PC-3 (cell line): ENCODE measurements at regions of chr5 and their contacts with region 1.

Region 1: DNA sequence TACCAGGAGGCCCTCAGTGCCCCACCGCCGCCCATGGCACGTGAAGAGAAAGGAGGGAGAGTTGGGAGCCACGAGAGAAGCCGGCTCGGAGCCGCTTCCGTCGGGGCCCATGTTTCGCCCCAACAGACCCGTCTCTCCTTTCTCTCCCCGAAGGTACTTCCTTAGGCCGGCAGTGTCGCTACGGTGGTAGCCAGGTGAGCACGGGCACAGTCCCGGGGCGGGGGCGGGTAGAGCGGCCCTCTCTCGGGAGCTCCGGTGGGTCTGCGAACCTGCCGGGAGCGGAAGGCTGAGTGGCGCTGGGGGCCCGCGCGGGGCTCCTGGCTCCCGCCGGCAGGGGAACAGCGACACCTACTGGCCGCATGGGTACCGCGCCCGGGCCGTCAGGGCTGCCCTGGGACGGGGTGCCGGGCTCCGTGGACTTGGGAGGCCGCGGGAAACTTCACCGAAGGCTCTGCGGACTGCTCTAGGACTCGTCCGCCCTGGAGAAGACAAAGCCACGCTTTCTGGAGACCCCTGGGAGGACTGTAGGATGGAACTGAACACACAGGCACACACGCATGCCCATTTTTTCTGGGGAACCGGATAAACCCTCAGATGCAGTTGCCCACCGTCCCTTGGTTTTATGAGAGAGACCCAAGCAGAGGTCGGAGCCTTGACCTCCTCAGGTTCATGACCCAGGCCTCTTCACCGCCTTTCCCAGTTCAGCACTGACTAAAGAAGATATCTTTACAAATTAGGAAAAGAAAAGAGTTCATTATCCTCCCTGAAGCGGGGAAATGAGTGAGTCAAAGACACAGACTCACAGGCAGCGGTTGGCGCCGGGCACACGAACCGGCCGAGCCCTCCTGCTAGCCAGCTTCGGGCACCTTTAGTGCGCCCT is 202.5 kb downstream of the MEF2C start:
- DNase-seq: peak; percentile 80
- ATAC-seq: peak; percentile 96
- H3K4me3 ChIP-seq: peak overlapping the region; percentile 85
- H3K27ac ChIP-seq: no peak overlapping the region
- H3K4me1 ChIP-seq: peaks cover 6% of the 10 kb centered on the region; the same call in 1 of the 2 replicates
- H3K27me3 ChIP-seq: no peaks in the 10 kb centered on the region
- CTCF ChIP-seq: peak; percentile 89

Region 2: GRCh38 chr5:88268385-88269184 is 411.9 kb before region 1 on chr5 and contains the start of gene TMEM161B:
- CTCF ChIA-PET with region 1: no interaction called
- POLR2A ChIA-PET with region 1: interaction called, 4 read pairs
- intact Hi-C with region 1: loop called (anchors 2 kb)
- DNase-seq: peak; percentile 93
- ATAC-seq: peak; percentile 98
- H3K4me3 ChIP-seq: peak within 1 kb of the TSS; percentile 96
- H3K27ac ChIP-seq: peak within 1 kb of the TSS; percentile 28; the same call in 1 of the 2 replicates
- H3K4me1 ChIP-seq: peaks cover 33% of the 10 kb centered on the region
- H3K27me3 ChIP-seq: no peaks in the 10 kb centered on the region
- CTCF ChIP-seq: no peak
- total RNA-seq, gene TMEM161B: 11.5 and 12.2 TPM in 2 replicates

Region 3: DNA sequence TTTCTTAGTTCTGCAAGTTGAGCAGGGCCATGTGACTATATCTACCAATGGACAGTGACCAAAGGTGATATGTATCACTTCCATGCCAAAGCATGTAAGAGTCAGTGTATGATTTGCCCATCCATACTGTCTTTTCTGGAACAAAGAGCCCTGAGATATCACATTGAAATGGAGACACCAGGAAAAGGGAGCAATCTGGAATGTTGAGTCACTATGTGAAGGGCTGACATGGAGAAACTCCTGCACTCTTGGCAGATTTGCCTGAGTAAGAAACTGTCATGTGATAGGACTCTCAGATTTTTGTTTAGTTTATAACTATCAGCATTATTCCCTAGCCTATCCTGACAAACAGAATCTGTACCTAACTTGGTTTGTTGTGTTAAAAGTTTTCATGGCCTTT is 382.1 kb before region 1 on chr5:
- CTCF ChIA-PET with region 1: interaction called, 13 read pairs
- POLR2A ChIA-PET with region 1: no interaction called
- intact Hi-C with region 1: no loop called
- DNase-seq: peak; percentile 12
- ATAC-seq: no peak
- H3K4me3 ChIP-seq: no peak overlapping the region
- H3K27ac ChIP-seq: no peak overlapping the region
- H3K4me1 ChIP-seq: no peaks in the 10 kb centered on the region
- H3K27me3 ChIP-seq: no peaks in the 10 kb centered on the region
- CTCF ChIP-seq: no peak

Region 4: DNA sequence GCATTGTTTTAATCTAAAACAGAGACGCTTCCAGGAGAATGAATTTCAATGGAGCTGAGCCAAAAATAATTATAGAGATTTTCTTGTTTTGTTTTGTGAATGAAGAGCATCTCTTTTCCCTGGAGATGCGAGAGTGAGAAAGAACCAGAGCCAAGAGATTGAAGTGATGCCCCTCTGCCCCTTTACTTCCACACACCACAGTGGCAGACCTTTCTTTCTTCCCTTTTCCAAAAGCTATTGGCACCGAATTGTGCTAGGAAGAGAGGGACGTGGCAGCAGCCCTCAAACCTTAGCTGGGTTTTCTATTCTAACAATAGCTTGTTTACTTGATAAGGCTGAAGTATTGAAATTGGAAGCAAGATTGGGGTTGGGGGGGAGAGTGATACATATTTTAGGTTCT is 278.8 kb before region 1 on chr5:
- CTCF ChIA-PET with region 1: no interaction called
- POLR2A ChIA-PET with region 1: no interaction called
- intact Hi-C with region 1: no loop called
- DNase-seq: no peak
- ATAC-seq: no peak
- H3K4me3 ChIP-seq: no peak overlapping the region
- H3K27ac ChIP-seq: no peak overlapping the region
- H3K4me1 ChIP-seq: peaks cover 15% of the 10 kb centered on the region
- H3K27me3 ChIP-seq: no peaks in the 10 kb centered on the region
- CTCF ChIP-seq: no peak

Region 5: GRCh38 chr5:88732181-88732633 is 51.7 kb after region 1 on chr5:
- CTCF ChIA-PET with region 1: no interaction called
- POLR2A ChIA-PET with region 1: no interaction called
- intact Hi-C with region 1: no loop called
- DNase-seq: no peak
- ATAC-seq: no peak
- H3K4me3 ChIP-seq: no peak overlapping the region
- H3K27ac ChIP-seq: no peak overlapping the region
- H3K4me1 ChIP-seq: 0 out of 2 replicates have a peak, but pooled peaks cover 9% of the 10 kb centered on the region
- H3K27me3 ChIP-seq: no peaks in the 10 kb centered on the region
- CTCF ChIP-seq: no peak

Region 6: GRCh38 chr5:89156226-89156625 is 475.7 kb after region 1 on chr5:
- CTCF ChIA-PET with region 1: no interaction called
- POLR2A ChIA-PET with region 1: no interaction called
- intact Hi-C with region 1: no loop called
- DNase-seq: no peak
- ATAC-seq: no peak
- H3K4me3 ChIP-seq: no peak overlapping the region
- H3K27ac ChIP-seq: no peak overlapping the region
- H3K4me1 ChIP-seq: no peaks in the 10 kb centered on the region
- H3K27me3 ChIP-seq: no peaks in the 10 kb centered on the region
- CTCF ChIP-seq: no peak